ENCODE measurements at regions of chr4 and their contacts with region 1.

Region 1: DNA sequence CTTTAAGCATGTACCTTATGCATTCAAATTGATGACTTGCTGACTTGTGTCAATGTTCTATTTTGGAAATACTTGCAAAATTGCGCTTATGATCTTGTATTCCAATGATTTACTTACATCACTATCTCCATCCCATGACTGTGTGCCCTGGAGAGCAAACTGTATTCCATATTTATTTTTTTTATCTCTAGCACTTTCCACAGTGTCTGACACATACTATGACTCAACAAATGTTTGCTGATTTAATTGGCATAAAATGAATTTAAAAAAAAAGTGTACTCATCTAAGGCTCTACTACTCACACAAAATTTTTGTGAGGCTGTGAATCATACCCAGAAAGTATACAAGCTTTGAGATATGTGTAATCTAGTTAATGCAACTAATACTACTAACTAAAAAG is 1066.8 kb upstream of the ADGRL3 start:
- DNase-seq: peak; percentile 80
- ATAC-seq: peak; percentile 94
- H3K4me3 ChIP-seq: no peak overlapping the region
- H3K27ac ChIP-seq: no peak overlapping the region
- H3K4me1 ChIP-seq: peaks cover 9% of the 10 kb centered on the region; the same call in 1 of the 2 replicates
- H3K27me3 ChIP-seq: no peaks in the 10 kb centered on the region
- CTCF ChIP-seq: no peak

Region 2: DNA sequence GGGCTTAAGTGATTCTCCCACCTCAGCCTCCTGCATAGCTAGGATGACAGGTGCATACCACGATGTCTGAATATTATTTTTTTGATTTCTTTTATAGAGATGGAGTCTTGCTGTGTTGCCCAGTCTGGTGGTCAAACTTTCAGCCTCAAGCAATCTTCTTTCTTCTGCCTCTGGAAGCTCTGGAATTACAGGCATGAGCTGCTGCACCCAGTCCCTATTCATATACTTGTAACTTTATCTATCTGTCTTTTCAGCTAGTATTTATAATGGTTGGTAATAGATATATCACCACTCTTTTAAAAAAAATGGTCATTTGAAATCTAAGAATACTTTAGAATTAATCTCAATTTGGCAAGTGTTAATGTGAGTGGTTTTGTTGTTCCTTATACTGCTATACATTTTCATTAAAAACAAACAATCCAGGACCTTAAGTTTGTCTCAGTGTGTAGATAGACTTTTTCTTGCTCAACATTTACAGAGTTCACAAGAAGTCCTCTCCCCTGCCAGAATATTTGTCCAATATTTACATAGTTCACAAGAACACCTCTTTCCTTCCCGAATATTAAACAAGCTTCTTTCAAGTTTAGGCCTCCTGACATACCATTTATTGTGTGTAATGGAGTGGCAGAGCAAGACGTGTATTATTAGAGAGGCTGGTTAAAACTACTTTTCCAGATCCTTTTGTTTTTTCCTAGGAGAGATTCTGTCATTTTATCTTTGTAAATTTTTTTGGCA is 130.6 kb before region 1 on chr4:
- CTCF ChIA-PET with region 1: no interaction called
- POLR2A ChIA-PET with region 1: no interaction called
- intact Hi-C with region 1: loop called (anchors 2 kb)
- DNase-seq: no peak
- ATAC-seq: no peak
- H3K4me3 ChIP-seq: no peak overlapping the region
- H3K27ac ChIP-seq: no peak overlapping the region
- H3K4me1 ChIP-seq: no peaks in the 10 kb centered on the region
- H3K27me3 ChIP-seq: no peaks in the 10 kb centered on the region
- CTCF ChIP-seq: no peak

Region 3: GRCh38 chr4:60241866-60242265 is 108.5 kb after region 1 on chr4:
- CTCF ChIA-PET with region 1: no interaction called
- POLR2A ChIA-PET with region 1: interaction called, 10 read pairs
- intact Hi-C with region 1: no loop called
- DNase-seq: no peak
- ATAC-seq: no peak
- H3K4me3 ChIP-seq: no peak overlapping the region
- H3K27ac ChIP-seq: no peak overlapping the region
- H3K4me1 ChIP-seq: no peaks in the 10 kb centered on the region
- H3K27me3 ChIP-seq: no peaks in the 10 kb centered on the region
- CTCF ChIP-seq: no peak

Measured in PC-3 (cell line).